ENCODE measurements at regions of chr16 and their contacts with region 1.

Region 1: GRCh38 chr16:55035029-55035428 is 104.4 kb downstream of the IRX5 start:
- DNase-seq: no peak
- ATAC-seq: peak; percentile 77
- H3K4me3 ChIP-seq: no peak overlapping the region
- H3K27ac ChIP-seq: no peak overlapping the region
- H3K4me1 ChIP-seq: no peaks in the 10 kb centered on the region
- H3K27me3 ChIP-seq: no peaks in the 10 kb centered on the region
- CTCF ChIP-seq: peak; percentile 46 to 57 (median 47)
- EP300 ChIP-seq: no peak
- POLR2A ChIP-seq: no peak
- RAD21 ChIP-seq: peak; percentile 35

Region 2: DNA sequence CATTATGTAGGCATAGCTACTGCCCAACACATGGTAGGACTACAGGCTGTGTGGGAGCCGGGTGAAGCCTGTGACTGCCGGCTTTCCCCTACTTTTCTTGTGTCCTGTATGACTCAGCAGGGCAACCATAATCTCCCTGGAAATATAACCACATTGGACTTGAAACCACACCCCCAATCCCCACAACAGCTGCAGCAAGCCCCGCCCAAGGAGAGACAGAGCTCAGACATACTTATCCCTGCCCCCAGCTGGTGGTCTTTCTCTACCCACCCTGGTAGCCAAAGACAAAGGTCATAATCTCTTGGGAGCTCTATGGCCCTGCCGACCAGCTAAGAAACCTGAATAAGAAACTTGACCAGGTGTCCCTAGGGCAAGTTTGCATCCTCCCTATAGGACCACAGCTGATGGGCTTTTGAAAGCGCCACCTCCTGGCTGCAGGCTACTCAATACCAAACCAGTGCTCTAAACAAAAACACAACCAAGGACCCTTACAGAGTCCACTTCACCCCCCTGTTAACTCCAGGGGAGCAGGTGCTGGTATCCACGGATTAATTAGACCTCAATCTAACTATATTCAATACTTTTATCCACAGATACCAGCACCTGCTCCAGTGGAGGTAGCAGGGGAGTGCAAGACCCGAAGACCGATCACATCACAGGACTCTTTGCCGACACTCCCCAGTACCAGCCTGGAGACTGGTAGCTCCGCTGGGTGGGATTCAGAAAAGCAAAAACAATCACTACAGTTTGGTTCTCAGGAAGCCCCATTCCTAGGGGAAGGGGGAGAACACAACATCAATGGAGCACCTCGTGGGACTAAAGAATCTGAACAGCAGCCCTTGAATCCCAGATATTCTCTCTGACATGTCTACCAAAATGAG is 13.2 kb before region 1 on chr16:
- CTCF ChIA-PET with region 1: interaction called, 14 read pairs
- POLR2A ChIA-PET with region 1: no interaction called
- RAD21 ChIA-PET with region 1: no interaction called
- SMC1A ChIA-PET with region 1: interaction called, 4 read pairs
- in situ Hi-C with region 1: no loop called
- intact Hi-C with region 1: no loop called
- DNase-seq: no peak
- ATAC-seq: no peak
- H3K4me3 ChIP-seq: no peak overlapping the region
- H3K27ac ChIP-seq: no peak overlapping the region
- H3K4me1 ChIP-seq: no peaks in the 10 kb centered on the region
- H3K27me3 ChIP-seq: no peaks in the 10 kb centered on the region
- CTCF ChIP-seq: 0 out of 6 replicates have a peak, but pooled peaks of 1 of the 3 experiments have one; percentile 8
- EP300 ChIP-seq: no peak
- POLR2A ChIP-seq: no peak
- RAD21 ChIP-seq: no peak

Region 3: DNA sequence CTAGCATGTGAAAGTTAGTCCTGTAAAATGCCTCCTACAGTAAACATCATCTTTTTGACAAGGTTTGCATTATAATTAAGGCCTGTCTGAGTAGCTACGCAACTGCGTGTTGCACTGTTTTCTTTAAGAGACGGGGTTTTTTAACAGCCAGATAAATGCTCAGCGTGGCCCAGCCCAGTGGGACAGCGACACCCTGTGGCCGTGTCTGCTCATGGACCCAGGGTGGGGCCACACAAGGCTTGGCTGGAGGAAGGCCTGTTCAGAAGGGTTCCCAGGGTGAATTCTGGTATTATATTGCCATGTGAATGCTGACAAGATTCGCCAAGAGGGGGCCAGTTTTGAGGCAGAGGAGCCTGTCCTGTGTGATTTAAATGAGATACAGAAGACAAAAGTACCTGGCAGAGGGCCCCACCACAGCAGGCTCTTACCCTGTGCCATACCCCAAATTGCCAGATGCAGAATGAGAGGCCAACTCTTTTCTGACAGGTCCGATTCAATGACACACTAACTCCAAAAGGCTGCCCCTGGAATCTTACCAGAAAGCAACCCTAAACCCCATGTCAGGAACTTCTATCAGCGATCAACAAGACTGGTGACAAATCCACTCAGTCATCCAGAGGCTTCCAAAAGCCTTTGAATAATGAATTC is 223.1 kb after region 1 on chr16:
- CTCF ChIA-PET with region 1: interaction called, 10 read pairs
- POLR2A ChIA-PET with region 1: no interaction called
- RAD21 ChIA-PET with region 1: interaction called, 4 read pairs
- SMC1A ChIA-PET with region 1: interaction called, 4 read pairs
- in situ Hi-C with region 1: no loop called
- intact Hi-C with region 1: loop called (anchors 2 kb)
- DNase-seq: no peak
- ATAC-seq: peak; percentile 84
- H3K4me3 ChIP-seq: no peak overlapping the region
- H3K27ac ChIP-seq: no peak overlapping the region
- H3K4me1 ChIP-seq: no peaks in the 10 kb centered on the region
- H3K27me3 ChIP-seq: no peaks in the 10 kb centered on the region
- CTCF ChIP-seq: peak; percentile 46 to 61 (median 55); a peak in 5 of 6 replicates
- EP300 ChIP-seq: no peak
- POLR2A ChIP-seq: no peak
- RAD21 ChIP-seq: peak; percentile 70

Measured in GM12878 (cell line).